ENCODE measurements at regions of chr7 and their contacts with region 1.

Region 1: GRCh38 chr7:106392590-106392989 is 107.8 kb upstream of the NAMPT start:
- DNase-seq: no peak
- ATAC-seq: no peak
- H3K4me3 ChIP-seq: no peak overlapping the region
- H3K27ac ChIP-seq: no peak overlapping the region
- H3K4me1 ChIP-seq: no peaks in the 10 kb centered on the region
- H3K27me3 ChIP-seq: no peaks in the 10 kb centered on the region; a peak in 1 of 5 replicates
- CTCF ChIP-seq: no peak
- EP300 ChIP-seq: no peak
- POLR2A ChIP-seq: no peak
- RAD21 ChIP-seq: no peak

Region 2: GRCh38 chr7:105985229-105985628 is 407.4 kb before region 1 on chr7:
- CTCF ChIA-PET with region 1: no interaction called
- POLR2A ChIA-PET with region 1: no interaction called
- in situ Hi-C with region 1: no loop called
- intact Hi-C with region 1: no loop called
- DNase-seq: no peak
- ATAC-seq: no peak
- H3K4me3 ChIP-seq: no peak overlapping the region
- H3K27ac ChIP-seq: no peak overlapping the region
- H3K4me1 ChIP-seq: no peaks in the 10 kb centered on the region
- H3K27me3 ChIP-seq: peaks cover 27 to 54% of the 10 kb centered on the region in 2 experiments
- CTCF ChIP-seq: no peak
- EP300 ChIP-seq: no peak
- POLR2A ChIP-seq: no peak
- RAD21 ChIP-seq: no peak

Region 3: GRCh38 chr7:106377847-106378361 is 14.7 kb before region 1 on chr7:
- CTCF ChIA-PET with region 1: no interaction called
- POLR2A ChIA-PET with region 1: interaction called, 23 read pairs
- in situ Hi-C with region 1: no loop called
- intact Hi-C with region 1: no loop called
- DNase-seq: no peak
- ATAC-seq: peak; percentile 58
- H3K4me3 ChIP-seq: no peak overlapping the region
- H3K27ac ChIP-seq: no peak overlapping the region
- H3K4me1 ChIP-seq: peaks cover 0 to 16% of the 10 kb centered on the region in 2 experiments; a peak in 3 of 5 replicates
- H3K27me3 ChIP-seq: no peaks in the 10 kb centered on the region
- CTCF ChIP-seq: no peak
- EP300 ChIP-seq: no peak
- POLR2A ChIP-seq: no peak
- RAD21 ChIP-seq: no peak

Region 4: GRCh38 chr7:106542550-106543220 is 150.1 kb after region 1 on chr7:
- CTCF ChIA-PET with region 1: no interaction called
- POLR2A ChIA-PET with region 1: no interaction called
- in situ Hi-C with region 1: no loop called
- intact Hi-C with region 1: no loop called
- DNase-seq: peak; percentile 77 to 96 (median 84)
- ATAC-seq: peak; percentile 96
- H3K4me3 ChIP-seq: no peak overlapping the region
- H3K27ac ChIP-seq: peak overlapping the region; percentile 30
- H3K4me1 ChIP-seq: peaks cover 0 to 22% of the 10 kb centered on the region in 2 experiments; a peak in 2 of 5 replicates
- H3K27me3 ChIP-seq: no peaks in the 10 kb centered on the region
- CTCF ChIP-seq: peak; percentile 95 to 98 (median 98)
- EP300 ChIP-seq: peak; percentile 63
- POLR2A ChIP-seq: no peak
- RAD21 ChIP-seq: peak; percentile 100

Measured in K562 (cell line).